MCF 10A (cell line): ENCODE measurements at regions of chr6 and their contacts with region 1.

Region 1: DNA sequence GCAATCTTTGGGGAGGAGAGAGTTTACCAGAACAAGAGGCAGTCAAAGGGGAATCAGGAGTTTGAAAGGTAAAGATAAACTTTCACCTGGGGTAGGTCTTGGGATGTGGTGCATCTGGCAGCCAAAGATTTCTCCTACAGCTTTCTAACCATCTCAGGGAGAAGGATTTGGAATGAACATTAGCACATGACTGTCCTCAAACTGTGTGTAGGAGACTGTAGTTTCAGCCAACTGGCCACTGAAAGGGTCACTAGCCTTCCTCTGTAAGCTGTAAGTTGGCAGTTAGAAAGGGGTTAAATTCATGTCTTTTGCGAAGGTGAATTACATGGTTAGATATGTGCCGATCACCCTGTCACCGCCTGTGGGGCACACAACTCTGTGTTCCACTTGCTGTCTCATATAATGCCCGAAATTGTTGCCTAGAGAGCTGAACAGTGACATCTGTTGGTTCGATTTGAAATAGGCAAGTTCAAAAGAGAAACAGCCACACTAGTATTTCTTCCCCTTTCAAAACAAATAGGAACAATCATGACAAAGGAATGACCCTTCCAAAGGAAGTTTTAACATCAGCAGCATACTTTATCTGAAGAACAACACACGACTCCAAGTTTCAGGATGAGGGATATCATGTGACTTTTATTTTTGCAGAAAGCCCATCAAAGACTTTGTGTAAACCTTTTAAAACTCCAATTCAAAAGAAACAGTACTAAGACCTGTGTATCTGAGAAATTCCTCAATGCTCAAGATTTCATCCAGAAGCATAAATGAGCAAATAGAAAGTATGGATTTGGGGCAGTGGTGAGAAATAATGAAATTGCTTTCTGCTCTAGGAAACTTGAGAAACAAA is 1.1 kb upstream of the OPN5 start:
- DNase-seq: peak; percentile 76
- H3K4me3 Mint-ChIP-seq: no peak overlapping the region
- H3K27ac Mint-ChIP-seq: peak overlapping the region; percentile 39
- H3K4me1 Mint-ChIP-seq: no peaks in the 10 kb centered on the region
- H3K27me3 Mint-ChIP-seq: no peaks in the 10 kb centered on the region
- CTCF ChIP-seq: peak; percentile 41

Region 2: DNA sequence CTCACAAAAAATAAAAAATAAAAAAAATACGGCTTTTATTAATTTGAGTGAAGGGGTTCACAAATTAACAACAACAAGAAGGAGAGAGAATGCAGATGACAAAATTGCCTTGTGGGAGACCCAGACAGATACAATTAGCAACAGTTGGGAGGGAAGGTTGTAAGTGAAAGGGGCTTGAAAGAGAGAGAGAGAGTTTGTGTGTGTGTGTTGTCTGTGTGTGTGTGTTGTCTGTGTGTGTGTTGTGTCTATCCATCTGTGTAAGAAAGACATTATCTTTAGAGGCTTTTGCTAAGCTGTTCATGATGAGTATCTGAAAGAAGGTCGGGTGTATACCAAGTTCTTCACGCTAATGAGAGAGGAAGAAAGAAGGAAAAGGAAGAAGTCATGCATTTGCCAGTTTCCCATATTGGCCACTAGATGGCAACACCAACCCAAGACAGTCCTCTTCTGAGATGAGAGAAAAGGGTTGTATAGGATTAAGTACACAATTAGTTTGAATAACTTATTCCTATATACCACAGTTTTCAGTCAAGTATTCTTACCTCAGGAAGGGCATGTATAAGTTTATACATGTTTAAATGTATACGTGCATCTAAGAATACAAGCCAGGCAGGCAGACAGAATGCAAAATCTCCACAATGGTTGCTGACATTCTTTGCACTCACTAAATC is 366.8 kb before region 1 on chr6:
- CTCF ChIA-PET with region 1: interaction called, 24 read pairs
- POLR2A ChIA-PET with region 1: interaction called, 3 read pairs
- intact Hi-C with region 1: loop called (anchors 1 kb)
- DNase-seq: peak; percentile 81
- H3K4me3 Mint-ChIP-seq: peak overlapping the region; percentile 68
- H3K27ac Mint-ChIP-seq: peak overlapping the region; percentile 94
- H3K4me1 Mint-ChIP-seq: peaks cover 18% of the 10 kb centered on the region
- H3K27me3 Mint-ChIP-seq: no peaks in the 10 kb centered on the region
- CTCF ChIP-seq: peak; percentile 75

Region 3: DNA sequence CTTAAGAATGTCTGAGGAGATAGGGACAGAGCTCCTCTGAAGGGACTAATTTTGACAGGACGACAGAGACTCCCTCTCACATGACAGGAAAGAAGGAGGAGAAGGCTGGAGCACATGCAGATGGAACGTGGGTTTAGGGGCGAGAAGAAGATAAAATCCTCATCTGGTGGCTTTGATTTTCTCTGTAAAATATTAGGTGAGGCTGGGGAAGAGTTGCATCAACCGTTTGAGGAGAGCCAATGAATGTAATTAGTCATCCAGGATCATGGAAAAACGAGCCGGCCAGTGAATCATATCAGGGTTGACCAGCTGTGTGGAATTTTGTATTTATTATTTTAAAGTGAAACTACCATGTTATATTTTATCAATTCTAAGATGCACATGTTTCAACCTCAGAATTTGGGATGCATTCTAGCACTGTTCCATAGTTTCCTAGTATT is 129.2 kb before region 1 on chr6:
- CTCF ChIA-PET with region 1: interaction called, 13 read pairs
- POLR2A ChIA-PET with region 1: interaction called, 3 read pairs
- intact Hi-C with region 1: loop called (anchors 1 kb)
- DNase-seq: peak; percentile 66
- H3K4me3 Mint-ChIP-seq: no peak overlapping the region
- H3K27ac Mint-ChIP-seq: no peak overlapping the region
- H3K4me1 Mint-ChIP-seq: peaks cover 11% of the 10 kb centered on the region
- H3K27me3 Mint-ChIP-seq: no peaks in the 10 kb centered on the region
- CTCF ChIP-seq: no peak

Region 4: GRCh38 chr6:47741807-47742206 is 38.9 kb before region 1 on chr6:
- CTCF ChIA-PET with region 1: interaction called, 14 read pairs
- POLR2A ChIA-PET with region 1: no interaction called
- intact Hi-C with region 1: no loop called
- DNase-seq: peak; percentile 89
- H3K4me3 Mint-ChIP-seq: no peak overlapping the region
- H3K27ac Mint-ChIP-seq: peak overlapping the region; percentile 2
- H3K4me1 Mint-ChIP-seq: peaks cover 12% of the 10 kb centered on the region
- H3K27me3 Mint-ChIP-seq: no peaks in the 10 kb centered on the region
- CTCF ChIP-seq: no peak

Region 5: DNA sequence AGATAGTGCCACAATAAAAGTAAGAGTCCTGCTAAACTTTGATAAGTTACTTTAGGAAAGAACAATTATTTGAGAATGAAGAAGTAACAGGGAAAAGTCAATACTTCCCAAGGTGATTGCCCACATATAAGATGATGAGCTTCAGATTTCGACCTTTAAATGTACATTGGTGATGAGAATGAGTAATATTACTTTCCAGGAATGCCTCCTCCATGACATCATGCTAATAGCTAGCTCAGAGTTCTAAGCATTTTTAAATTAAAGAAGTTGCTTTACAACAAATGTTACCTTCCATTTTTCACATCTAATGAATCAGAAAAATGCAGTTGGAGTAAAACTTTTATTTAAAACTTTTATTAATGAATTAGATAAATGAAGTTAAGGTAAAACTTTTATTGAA is 21.4 kb before region 1 on chr6:
- CTCF ChIA-PET with region 1: interaction called, 10 read pairs
- POLR2A ChIA-PET with region 1: no interaction called
- intact Hi-C with region 1: no loop called
- DNase-seq: no peak
- H3K4me3 Mint-ChIP-seq: no peak overlapping the region
- H3K27ac Mint-ChIP-seq: no peak overlapping the region
- H3K4me1 Mint-ChIP-seq: no peaks in the 10 kb centered on the region
- H3K27me3 Mint-ChIP-seq: no peaks in the 10 kb centered on the region
- CTCF ChIP-seq: no peak